ENCODE measurements at regions of chr6 and their contacts with region 1.

Region 1: GRCh38 chr6:7389451-7390225 is at the starts of genes CAGE1 and RIOK1:
- DNase-seq: peak; percentile 99
- H3K4me3 Mint-ChIP-seq: peak within 1 kb of the TSS; percentile 93
- H3K27ac Mint-ChIP-seq: peak within 1 kb of the TSS; percentile 100
- H3K4me1 Mint-ChIP-seq: peaks cover 43% of the 10 kb centered on the region
- H3K27me3 Mint-ChIP-seq: no peaks in the 10 kb centered on the region
- total RNA-seq, gene CAGE1: 0.16 and 0.31 TPM in 2 replicates
- total RNA-seq, gene RIOK1: 56.7 and 62.1 TPM in 2 replicates

Region 2: DNA sequence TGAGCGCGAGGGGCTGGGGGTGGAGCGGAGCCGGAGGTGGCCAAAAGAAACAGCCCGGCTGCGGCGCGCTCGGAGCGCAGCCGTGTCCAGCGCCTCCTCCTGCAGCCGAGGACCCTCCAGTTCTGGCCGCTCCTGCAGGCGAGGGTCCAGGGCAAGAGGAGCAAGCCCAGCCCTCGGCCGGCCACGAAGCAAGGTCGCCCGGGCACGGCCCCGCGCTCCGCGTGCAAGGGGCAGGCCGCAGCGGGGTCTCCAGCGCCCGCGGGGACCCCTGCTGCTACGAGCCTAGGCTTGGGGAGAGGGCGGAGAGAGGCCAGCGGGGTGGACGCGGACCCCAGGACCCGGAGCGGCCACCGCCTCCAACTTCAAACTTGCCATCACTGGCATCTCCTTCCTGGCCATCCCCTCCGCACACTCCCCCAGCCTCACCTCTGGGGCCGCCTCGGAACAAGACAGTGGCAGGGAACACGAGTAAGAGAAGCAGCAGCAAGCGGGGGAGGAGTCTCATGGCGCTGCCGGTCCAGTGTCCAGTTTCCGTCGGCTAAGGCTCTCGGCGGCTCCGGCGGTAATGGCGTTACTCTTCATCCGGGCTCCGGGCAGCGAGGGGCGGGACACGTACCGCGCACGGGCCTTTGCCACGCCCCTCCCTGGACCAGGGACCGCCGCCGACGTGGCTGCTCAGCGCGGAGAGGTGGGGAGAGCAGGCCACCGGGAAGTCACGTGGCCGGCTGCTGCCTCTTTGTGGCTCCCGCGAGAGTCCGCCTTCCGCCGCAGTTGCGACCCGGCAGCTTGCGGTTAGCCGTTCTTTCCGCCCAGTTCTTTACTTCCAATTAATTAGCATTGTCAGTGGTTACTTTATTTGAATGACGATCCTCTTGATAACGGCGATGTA is 76.8 kb before region 1 on chr6 and contains the start of gene SSR1:
- intact Hi-C with region 1: loop called (anchors 1 kb)
- DNase-seq: peak; percentile 99
- H3K4me3 Mint-ChIP-seq: peak within 1 kb of the TSS; percentile 96
- H3K27ac Mint-ChIP-seq: peak within 1 kb of the TSS; percentile 98
- H3K4me1 Mint-ChIP-seq: peaks cover 38% of the 10 kb centered on the region
- H3K27me3 Mint-ChIP-seq: no peaks in the 10 kb centered on the region
- total RNA-seq, gene SSR1: 157 and 162 TPM in 2 replicates

Region 3: DNA sequence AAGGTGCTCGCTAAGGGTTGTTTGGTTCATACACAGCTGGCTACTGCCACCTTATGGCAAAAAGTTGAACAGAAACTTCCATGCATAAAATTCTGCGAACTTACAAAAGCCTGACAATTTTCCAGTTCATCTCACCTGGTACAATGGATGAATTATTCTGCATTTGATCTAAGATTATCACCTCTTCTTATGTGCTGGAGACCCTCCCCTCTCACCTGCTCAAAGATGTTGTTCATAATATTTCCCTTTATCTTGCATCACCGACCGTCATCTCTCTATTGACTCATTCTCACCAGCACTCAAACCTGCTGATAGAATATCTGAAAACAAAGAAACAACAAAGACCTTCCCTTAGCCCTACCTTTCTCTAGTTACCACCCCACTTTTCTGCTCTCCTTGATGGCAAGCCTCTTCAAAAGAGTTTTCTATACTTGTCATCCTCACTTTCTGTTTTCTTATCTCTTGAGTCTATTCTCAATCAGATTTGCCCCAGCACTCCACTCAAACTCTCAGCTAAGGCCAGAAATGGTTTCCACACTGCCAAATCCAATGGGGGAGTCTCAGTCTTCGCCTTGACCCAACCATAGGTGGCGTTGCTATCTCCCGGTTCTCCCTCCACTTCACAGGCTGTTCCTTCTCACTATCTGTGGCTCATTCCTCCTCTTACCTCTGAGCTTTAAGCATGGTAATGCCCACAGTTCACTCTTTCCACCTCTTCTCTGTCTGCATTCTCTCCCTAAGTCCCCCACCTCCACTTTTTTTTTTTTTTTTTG is 226.2 kb after region 1 on chr6:
- intact Hi-C with region 1: loop called (anchors 1 kb)
- DNase-seq: peak; percentile 82
- H3K4me3 Mint-ChIP-seq: no peak overlapping the region
- H3K27ac Mint-ChIP-seq: no peak overlapping the region
- H3K4me1 Mint-ChIP-seq: peaks cover 12% of the 10 kb centered on the region
- H3K27me3 Mint-ChIP-seq: peaks cover 7% of the 10 kb centered on the region

Region 4: GRCh38 chr6:7691675-7692452 is 302.2 kb after region 1 on chr6:
- intact Hi-C with region 1: no loop called
- DNase-seq: no peak
- H3K4me3 Mint-ChIP-seq: no peak overlapping the region
- H3K27ac Mint-ChIP-seq: no peak overlapping the region
- H3K4me1 Mint-ChIP-seq: no peaks in the 10 kb centered on the region
- H3K27me3 Mint-ChIP-seq: peaks cover 21% of the 10 kb centered on the region

Region 5: DNA sequence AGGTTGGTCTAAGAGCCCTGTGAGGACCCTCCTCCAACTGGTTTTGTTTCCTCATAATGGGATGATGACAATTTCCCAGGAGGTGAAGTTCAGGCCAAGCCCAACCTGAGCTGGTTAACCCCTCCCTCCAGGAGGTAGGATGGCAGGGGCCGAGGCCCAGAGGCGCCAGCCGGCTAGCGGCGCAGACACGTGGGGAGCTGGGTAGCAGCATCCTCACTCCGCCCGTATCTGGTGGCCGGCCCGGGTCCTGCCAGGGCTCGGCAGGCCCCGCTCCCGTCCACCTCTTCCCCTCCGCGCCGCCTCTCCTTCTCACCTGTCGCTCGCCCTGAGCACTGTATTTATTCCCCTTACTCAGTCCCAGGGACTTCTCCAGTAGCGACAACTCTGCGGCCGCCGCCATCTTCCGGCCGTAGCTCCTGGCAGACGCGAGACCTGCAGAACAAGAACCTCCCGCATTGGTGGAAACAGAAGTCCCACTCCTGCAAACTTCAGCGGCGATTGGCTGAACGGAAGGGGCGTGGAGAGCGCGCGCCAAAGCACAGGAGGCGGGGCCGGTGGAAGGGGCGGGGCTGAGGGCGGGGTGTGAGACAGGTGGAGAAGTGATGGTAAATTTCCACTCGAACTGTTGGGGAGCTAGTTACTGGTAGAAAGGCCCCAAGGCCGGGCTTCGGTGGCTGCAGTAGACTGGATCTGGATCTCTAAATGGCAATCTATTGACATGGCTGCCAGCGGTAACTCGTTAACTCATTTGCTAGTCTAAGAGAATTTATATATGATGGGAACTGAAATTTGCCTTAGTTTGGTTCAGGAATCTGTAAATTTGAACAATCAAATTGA is 712.7 kb after region 1 on chr6 and contains the start of gene EEF1E1:
- intact Hi-C with region 1: loop called (anchors 10 kb)
- DNase-seq: peak; percentile 97
- H3K4me3 Mint-ChIP-seq: peak within 1 kb of the TSS; percentile 95
- H3K27ac Mint-ChIP-seq: peak within 1 kb of the TSS; percentile 99
- H3K4me1 Mint-ChIP-seq: peaks cover 24% of the 10 kb centered on the region
- H3K27me3 Mint-ChIP-seq: peaks cover 15% of the 10 kb centered on the region
- total RNA-seq, gene EEF1E1: 93.6 and 95.9 TPM in 2 replicates

Measured in activated CD4-positive, alpha-beta T cell treated with anti-CD3 and anti-CD28 coated beads, Interleukin-2, amount 10 ng/mL, durations not matched to agents 24 days and 14 days (primary cell).